ENCODE measurements at regions of chr1 and their contacts with region 1.

Region 1: GRCh38 chr1:44237721-44238457 is 24.6 kb downstream of the DMAP1 start:
- DNase-seq: no peak
- ATAC-seq: no peak
- H3K4me3 ChIP-seq: no peak overlapping the region
- H3K27ac ChIP-seq: no peak overlapping the region
- H3K4me1 ChIP-seq: peaks cover 12 to 28% (median 23%) of the 10 kb centered on the region in 9 donors
- H3K27me3 ChIP-seq: no peaks in the 10 kb centered on the region
- CTCF ChIP-seq: peak in 7 of 9 donors; percentile 19 to 47 (median 32)

Region 2: DNA sequence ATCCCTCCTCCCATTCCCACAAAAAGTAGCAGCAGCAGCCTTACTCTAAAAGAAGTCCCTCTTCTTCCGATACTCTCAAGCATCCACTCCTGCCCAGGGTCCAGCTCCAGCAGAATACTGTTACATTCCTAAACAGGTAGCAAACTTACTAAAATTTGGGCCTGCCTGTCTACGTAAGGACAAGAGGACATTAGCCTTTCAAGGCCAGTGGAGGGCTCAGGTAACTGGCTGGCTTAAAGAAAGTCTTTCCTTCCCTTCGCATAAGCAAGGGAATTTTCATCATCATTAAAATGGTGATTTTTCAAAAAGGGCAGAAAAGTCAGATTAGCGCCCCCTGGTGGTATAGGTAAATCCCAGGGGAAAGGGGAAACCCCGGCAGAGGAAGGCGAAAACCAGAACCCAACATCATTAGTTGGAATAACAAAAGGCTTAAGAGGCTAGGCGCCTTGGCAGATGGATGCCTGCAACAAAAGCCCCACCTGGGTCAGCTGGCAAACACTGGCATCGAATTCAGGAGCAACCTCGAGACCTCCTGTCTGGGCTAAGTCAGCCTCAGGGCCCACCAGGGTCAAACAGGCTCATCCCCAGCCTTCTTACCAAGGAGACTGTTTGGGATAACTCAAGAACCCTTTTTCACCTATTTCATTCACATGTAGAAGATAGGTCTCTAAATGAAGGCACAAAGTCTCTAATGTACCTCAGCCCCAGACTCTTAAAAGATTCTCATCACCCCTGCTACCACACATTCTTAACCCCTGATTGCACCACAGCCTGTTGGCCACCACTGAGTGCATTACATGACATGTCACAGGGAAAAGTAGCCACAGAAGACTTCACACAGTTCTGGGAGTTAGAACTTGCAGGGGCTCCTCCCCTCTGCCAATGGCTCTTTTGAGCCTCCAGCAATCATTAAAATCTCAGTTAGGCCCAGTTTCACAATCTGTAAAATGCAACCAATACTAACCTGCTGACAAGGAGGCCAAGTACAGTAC is 80.5 kb after region 1 on chr1:
- intact Hi-C with region 1: loop called in 1 of 10 experiments (anchors 5 kb)
- DNase-seq: peak in 1 of 2 donors; percentile 49
- ATAC-seq: no peak
- H3K4me3 ChIP-seq: no peak overlapping the region
- H3K27ac ChIP-seq: no peak overlapping the region
- H3K4me1 ChIP-seq: peaks cover 0 to 12% (median 0%) of the 10 kb centered on the region in 9 donors
- H3K27me3 ChIP-seq: no peaks in the 10 kb centered on the region
- CTCF ChIP-seq: peak; percentile 71 to 86 (median 80)

Region 3: DNA sequence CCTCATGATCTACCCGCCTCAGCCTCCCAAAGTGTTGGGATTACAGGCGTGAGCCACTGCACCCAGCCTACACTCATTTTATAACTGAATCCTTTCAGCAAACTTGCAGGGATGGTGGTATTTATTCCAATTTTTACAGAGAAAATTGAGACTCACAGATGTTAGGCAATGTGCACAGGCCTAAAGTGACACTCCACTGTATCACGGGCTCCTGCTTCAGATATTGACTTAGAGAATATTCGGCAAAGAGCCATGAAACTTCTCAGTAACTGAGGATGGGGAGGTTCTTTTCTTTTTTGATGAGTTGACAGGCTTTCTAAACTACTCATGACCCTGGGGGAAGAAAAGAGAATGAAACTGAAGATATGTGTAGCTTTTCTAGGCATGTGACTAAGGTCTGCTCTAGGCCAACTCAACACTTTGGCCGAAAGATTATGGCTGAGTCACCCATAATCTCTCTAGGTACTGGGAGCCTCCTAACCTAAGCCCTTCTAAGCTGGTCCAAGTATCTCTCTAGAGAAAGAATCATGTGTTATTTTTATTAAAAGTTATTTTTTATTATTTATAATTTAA is 625.0 kb after region 1 on chr1:
- intact Hi-C with region 1: no loop called
- DNase-seq: no peak
- ATAC-seq: peak in 2 of 8 donors; percentile 53 to 70
- H3K4me3 ChIP-seq: no peak overlapping the region
- H3K27ac ChIP-seq: peak overlapping the region in 1 of 10 donors; percentile 26
- H3K4me1 ChIP-seq: peaks cover 0 to 36% (median 19%) of the 10 kb centered on the region in 9 donors
- H3K27me3 ChIP-seq: no peaks in the 10 kb centered on the region
- CTCF ChIP-seq: no peak

Region 4: GRCh38 chr1:44884746-44885145 is 646.9 kb after region 1 on chr1:
- intact Hi-C with region 1: no loop called
- DNase-seq: peak in 1 of 2 donors; percentile 40
- ATAC-seq: peak; percentile 64 to 87 (median 79)
- H3K4me3 ChIP-seq: no peak overlapping the region
- H3K27ac ChIP-seq: peak overlapping the region in 3 of 10 donors; percentile 21 to 71 (median 30)
- H3K4me1 ChIP-seq: peaks cover 0 to 24% (median 3%) of the 10 kb centered on the region in 9 donors
- H3K27me3 ChIP-seq: no peaks in the 10 kb centered on the region
- CTCF ChIP-seq: no peak

Measured in heart right ventricle (tissue), 16 donors.